Spleen (tissue), 13 donors: ENCODE measurements at regions of chr13 and their contacts with region 1.

Region 1: GRCh38 chr13:94433055-94433961 is 46.2 kb downstream of the DCT start:
- DNase-seq: no peak
- H3K4me3 ChIP-seq: no peak overlapping the region
- H3K27ac ChIP-seq: no peak overlapping the region
- H3K4me1 ChIP-seq: no peaks in the 10 kb centered on the region
- H3K27me3 ChIP-seq: no peaks in the 10 kb centered on the region
- CTCF ChIP-seq: no peak
- POLR2A ChIP-seq: no peak

Region 2: GRCh38 chr13:94352057-94352456 is 81.3 kb before region 1 on chr13:
- intact Hi-C with region 1: no loop called
- DNase-seq: no peak
- H3K4me3 ChIP-seq: no peak overlapping the region
- H3K27ac ChIP-seq: no peak overlapping the region
- H3K4me1 ChIP-seq: no peaks in the 10 kb centered on the region
- H3K27me3 ChIP-seq: no peaks in the 10 kb centered on the region
- CTCF ChIP-seq: no peak
- POLR2A ChIP-seq: no peak

Region 3: DNA sequence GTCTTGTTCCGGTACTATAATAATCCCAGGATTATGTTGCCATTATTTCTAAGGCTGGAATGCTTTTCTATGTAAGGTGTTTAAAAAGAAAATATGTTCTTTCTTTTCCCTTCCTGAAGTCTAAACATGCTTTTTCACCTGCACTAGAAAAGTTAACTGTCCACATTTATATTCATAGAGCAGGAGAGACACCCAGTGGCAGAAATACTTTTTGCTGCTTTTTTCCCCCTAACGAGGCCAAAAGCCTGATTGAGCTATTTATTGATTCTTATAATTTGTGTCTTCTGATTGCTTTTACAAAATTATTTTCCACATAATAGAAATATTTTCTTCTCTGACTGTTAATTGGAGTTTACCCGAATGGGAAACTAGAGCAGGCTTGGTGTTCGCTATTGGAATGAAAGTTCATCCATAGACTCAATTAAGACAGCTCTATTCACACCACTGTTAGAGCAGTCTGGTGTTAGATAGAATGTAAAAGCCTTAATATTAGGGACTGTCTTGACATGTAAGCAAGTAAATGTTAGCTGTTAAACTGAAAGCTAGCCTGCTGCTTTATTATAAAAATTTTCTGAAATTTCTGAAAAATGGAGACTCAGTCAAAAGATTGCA is 184.2 kb after region 1 on chr13:
- intact Hi-C with region 1: loop called (anchors 5 kb)
- DNase-seq: no peak
- H3K4me3 ChIP-seq: no peak overlapping the region
- H3K27ac ChIP-seq: no peak overlapping the region
- H3K4me1 ChIP-seq: peaks cover 0 to 8% (median 0%) of the 10 kb centered on the region in 6 donors
- H3K27me3 ChIP-seq: no peaks in the 10 kb centered on the region
- CTCF ChIP-seq: peak; percentile 6 to 72 (median 59)
- POLR2A ChIP-seq: no peak